ENCODE measurements at regions of chr9 and their contacts with region 1.

Region 1: DNA sequence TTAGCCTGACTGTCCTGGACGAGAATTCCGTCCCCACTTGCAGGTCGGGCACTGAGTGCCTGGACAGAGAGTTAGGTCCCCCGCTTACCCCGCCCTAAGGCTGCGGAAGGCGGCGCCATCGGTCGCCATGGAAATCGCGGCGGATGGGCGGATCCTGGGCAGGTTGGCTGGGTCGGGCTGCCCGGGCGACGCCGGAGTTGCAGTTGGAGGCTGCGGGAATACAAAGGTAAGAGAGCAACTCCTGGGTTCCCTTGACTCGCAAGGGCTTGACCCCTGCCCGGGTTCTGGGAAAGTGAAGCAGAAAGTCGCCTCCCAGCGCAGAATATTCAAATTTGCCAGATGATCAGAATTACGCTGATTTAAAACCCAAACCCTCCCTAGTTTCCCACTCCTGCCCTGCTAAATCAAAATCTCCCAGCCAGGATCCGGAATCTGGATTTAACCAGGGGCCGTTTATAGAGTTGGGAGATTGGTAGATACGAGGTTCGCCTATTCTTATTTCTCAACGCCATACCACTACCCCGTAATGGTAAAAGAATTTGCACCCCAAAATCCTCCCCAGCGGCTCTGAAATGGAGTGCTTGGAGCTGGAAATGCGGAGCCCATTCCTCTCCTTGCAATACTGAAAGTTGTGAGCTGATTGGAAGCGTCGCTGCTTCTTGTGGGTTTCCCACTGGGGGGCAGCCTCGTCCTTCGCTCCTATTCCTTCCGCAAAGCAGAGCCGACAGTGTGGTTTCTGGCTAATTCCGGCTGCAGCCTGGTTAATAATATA is 156.4 kb upstream of the RASEF start:
- DNase-seq: peak; percentile 88
- H3K27ac ChIP-seq: peak overlapping the region; percentile 34
- CTCF ChIP-seq: peak; percentile 84

Region 2: DNA sequence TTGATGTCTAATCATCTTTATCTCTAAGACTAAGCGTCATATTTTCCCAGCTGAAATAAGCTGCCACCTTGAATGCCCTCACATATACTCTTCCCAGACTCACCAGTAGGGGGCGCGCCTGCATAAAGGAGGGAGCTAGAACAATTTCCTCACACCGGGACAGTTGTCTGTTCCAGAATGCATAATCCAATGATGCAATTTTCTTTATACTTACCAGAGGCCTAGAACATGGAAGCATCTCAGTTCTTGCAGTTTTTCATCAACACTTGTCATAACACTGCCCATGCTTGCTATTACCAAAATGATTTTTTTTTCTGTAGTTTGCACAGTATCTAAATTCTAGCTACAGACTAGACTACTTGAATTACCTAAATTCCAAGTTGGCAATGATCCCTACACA is 115.0 kb after region 1 on chr9:
- CTCF ChIA-PET with region 1: interaction called, 10 read pairs
- POLR2A ChIA-PET with region 1: no interaction called
- DNase-seq: peak; percentile 26
- H3K27ac ChIP-seq: no peak overlapping the region
- CTCF ChIP-seq: peak; percentile 74

Region 3: DNA sequence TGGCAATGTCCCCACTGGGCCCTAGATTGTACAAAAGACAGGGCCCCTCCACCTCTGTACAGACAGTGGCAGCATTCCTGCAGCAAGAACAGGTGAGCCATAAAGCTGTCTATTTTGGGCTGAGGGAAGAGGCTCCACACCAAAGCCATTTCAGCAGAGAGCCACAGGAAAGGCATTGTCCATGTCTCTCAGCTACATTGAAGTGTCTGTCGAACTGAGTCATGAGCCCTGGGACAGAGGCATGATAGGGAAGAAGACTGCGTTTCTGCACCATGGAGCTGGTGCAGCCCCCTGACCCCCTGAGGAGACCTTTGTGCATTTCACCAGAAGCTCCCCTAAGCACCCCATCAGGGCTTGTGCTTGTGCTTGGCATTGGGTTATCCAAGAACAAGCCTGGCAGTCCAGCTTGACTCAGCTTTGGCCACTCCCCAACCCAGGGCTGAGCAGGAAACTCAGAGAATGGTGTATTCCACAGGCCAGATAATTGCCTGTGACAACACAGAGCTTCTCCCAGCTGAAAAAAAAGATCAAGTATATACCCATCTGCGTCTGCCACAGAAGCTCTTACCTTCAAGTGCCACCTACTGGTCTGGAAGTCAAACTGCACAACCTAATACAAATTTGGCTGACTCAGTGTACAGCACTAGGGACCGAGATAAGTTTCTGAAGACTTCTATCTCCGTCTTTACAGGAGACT is 324.8 kb after region 1 on chr9:
- CTCF ChIA-PET with region 1: interaction called, 28 read pairs
- POLR2A ChIA-PET with region 1: no interaction called
- DNase-seq: peak; percentile 36
- H3K27ac ChIP-seq: no peak overlapping the region
- CTCF ChIP-seq: peak; percentile 49

Region 4: DNA sequence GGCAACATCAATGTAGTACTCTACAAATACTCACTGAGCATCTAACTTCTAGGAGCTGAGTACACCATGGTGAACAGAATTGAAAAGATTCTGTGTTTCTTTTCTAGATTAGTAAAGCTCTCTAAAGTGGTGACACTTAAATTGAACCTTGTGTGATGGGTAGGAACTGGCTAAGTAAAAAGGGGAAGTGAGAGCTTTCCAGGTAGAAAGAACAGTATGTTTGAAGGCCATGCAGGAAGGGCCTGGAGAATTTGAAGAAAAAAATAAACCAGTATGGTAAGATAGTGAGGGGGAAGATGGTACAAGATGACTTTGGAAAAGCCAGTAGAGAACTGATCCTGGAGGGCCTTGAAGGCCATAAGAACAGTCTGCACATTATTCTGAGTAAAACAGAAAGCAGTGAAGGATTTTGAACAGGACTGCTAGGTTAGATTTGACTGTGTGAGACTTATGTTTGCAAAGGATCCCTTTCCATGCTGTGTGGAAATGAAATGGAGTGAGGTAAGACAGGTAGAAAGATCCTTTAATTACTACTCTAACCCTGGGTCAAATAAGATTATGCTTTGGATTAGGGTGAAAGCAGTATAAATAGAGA is 535.1 kb after region 1 on chr9:
- CTCF ChIA-PET with region 1: no interaction called
- POLR2A ChIA-PET with region 1: no interaction called
- DNase-seq: no peak
- H3K27ac ChIP-seq: no peak overlapping the region
- CTCF ChIP-seq: no peak